ENCODE measurements at regions of chr12 and their contacts with region 1.

Region 1: GRCh38 chr12:93677195-93678064 is at the start of gene CRADD:
- DNase-seq: peak; percentile 53 to 93
- H3K4me3 ChIP-seq: peak within 1 kb of the TSS; percentile 74 to 84
- H3K27ac ChIP-seq: peak within 1 kb of the TSS; percentile 98 to 99
- H3K4me1 ChIP-seq: peaks cover 0 to 24% of the 10 kb centered on the region in 2 donors
- H3K27me3 ChIP-seq: no peaks in the 10 kb centered on the region
- CTCF ChIP-seq: no peak
- total RNA-seq, gene CRADD: not detected

Region 2: DNA sequence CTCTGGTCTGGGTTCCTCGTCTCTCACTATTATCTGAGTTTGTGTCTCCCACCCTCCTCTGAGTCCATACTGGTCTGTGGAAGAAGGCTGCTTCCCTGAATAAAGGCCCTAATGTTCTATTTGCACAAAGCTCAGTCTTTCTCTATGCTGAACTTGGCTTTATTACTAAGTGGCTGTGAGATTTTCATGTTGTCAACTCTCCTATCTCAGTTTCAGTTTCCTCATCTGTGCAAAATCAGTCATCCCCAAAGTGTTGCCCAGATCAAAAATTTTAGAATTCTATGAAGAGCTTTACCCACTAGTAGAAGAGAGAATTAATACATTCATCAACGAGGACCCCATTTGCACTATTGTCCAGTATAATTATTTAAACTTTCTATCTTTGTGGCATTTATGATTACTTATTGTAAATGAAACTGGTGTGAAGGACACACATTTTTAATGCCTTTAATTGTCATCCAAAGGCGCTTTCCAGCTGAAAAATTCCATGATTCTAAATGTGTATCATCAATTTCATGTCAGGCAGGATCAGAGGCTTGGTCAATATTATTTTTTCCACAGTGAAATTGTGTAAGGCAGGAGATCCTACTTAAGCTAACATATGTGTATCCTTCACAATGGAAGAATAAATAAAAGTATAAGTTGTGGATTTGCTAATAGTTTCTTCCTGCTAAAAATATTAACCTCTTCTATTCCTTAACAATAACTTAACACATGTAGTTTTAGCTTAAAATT is 669.2 kb before region 1 on chr12:
- intact Hi-C with region 1: no loop called
- DNase-seq: no peak
- H3K4me3 ChIP-seq: no peak overlapping the region
- H3K27ac ChIP-seq: no peak overlapping the region
- H3K4me1 ChIP-seq: peaks cover 0 to 1% of the 10 kb centered on the region in 2 donors
- H3K27me3 ChIP-seq: no peaks in the 10 kb centered on the region
- CTCF ChIP-seq: no peak

Region 3: DNA sequence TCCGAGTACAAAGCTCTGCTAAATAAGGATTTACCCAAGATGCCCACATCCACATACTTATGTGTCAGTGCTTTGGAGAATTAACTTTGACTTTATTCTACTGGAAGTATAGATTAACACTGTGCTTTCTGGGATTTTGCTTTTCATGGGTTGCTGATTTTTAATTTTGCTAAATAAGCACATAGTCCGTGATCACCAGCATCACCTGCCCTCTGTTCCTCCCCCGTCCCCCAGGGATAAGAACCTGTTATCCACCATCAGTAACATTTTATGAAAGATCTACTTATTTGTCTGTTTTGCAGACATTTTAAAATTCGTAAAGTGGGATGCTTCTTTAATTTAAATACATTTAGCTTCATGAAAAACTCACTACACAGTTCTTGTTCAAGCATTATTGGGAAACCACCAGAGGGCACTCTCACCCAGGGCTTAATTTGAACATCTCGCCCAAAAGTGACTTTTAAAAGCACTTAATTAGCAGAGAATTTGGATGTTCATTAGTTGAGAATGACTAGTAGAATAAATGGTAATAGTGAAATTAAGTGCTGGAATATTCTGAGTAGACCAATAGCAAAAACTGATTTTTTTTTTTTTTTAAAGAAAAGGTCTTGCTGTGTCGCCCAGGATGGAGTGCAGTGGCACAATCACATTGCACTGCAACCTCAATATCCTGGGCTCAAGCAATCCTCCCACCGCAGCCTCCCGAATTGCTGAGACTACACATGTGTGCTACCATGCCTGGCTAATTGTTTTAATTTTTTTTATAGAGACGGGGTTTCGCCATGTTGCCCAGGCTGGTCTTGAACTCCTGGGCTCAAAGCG is 174.4 kb before region 1 on chr12:
- intact Hi-C with region 1: loop called (anchors 5 kb)
- DNase-seq: peak in 1 of 2 donors; percentile 67
- H3K4me3 ChIP-seq: no peak overlapping the region
- H3K27ac ChIP-seq: no peak overlapping the region
- H3K4me1 ChIP-seq: no peaks in the 10 kb centered on the region
- H3K27me3 ChIP-seq: no peaks in the 10 kb centered on the region
- CTCF ChIP-seq: peak; percentile 57 to 81 (median 75)

Region 4: GRCh38 chr12:93591137-93591868 is 86.1 kb before region 1 on chr12:
- intact Hi-C with region 1: loop called (anchors 1 kb)
- DNase-seq: peak; percentile 62 to 91
- H3K4me3 ChIP-seq: peak overlapping the region; percentile 60 to 68
- H3K27ac ChIP-seq: peak overlapping the region; percentile 56 to 62
- H3K4me1 ChIP-seq: peaks cover 0 to 4% of the 10 kb centered on the region in 2 donors
- H3K27me3 ChIP-seq: no peaks in the 10 kb centered on the region
- CTCF ChIP-seq: no peak

Region 5: DNA sequence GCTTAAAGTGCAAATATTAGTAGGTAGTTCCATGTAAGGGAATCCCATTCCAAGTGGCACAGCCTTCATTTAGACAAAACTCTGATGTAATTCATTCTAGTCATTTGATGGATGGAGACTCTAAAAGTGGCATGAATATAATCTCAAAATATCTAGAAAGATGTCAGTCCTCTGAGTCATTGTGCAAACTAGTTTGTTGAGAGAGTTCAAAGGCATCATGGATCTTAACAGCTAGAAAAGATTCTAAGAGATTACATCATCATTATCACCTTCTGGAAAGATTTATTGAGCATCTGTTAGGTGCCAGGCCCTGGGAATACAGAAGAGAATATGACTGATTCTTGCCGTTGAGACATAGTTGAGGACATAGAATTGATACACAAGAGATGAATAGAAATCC is 30.4 kb after region 1 on chr12:
- intact Hi-C with region 1: loop called (anchors 1 kb)
- DNase-seq: no peak
- H3K4me3 ChIP-seq: no peak overlapping the region
- H3K27ac ChIP-seq: peak overlapping the region; percentile 69 to 78
- H3K4me1 ChIP-seq: peaks cover 3 to 41% of the 10 kb centered on the region in 2 donors
- H3K27me3 ChIP-seq: no peaks in the 10 kb centered on the region
- CTCF ChIP-seq: no peak

Region 6: GRCh38 chr12:93742110-93742934 is 64.9 kb after region 1 on chr12:
- intact Hi-C with region 1: loop called (anchors 1 kb)
- DNase-seq: peak in 1 of 2 donors; percentile 90
- H3K4me3 ChIP-seq: peak overlapping the region; percentile 61 to 76
- H3K27ac ChIP-seq: peak overlapping the region; percentile 90 to 93
- H3K4me1 ChIP-seq: peaks cover 2 to 18% of the 10 kb centered on the region in 2 donors
- H3K27me3 ChIP-seq: no peaks in the 10 kb centered on the region
- CTCF ChIP-seq: peak; percentile 17 to 62 (median 39)

Region 7: DNA sequence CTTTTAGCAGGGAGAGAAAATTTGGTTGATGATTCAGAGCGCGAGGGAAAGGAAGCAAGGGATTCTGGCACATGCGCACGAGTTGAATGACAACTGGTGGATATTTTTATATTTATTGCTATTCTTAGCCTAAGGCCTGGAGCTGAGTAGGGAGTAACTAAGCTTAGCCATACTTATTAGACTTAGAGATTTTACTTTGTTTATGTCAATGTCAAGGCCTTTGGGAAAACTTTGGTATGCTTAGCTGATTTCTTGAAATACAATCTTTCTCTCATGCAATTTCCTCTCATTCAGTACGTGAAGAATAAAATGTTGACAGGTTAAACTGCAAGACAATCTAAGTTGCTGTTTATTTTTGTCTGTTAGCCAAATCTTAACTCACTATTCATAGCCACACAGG is 100.9 kb after region 1 on chr12:
- intact Hi-C with region 1: loop called (anchors 5 kb)
- DNase-seq: peak in 1 of 2 donors; percentile 84
- H3K4me3 ChIP-seq: peak overlapping the region in 1 of 2 donors; percentile 15
- H3K27ac ChIP-seq: peak overlapping the region; percentile 91 to 92
- H3K4me1 ChIP-seq: peaks cover 17 to 32% of the 10 kb centered on the region in 2 donors
- H3K27me3 ChIP-seq: no peaks in the 10 kb centered on the region
- CTCF ChIP-seq: no peak

Region 8: DNA sequence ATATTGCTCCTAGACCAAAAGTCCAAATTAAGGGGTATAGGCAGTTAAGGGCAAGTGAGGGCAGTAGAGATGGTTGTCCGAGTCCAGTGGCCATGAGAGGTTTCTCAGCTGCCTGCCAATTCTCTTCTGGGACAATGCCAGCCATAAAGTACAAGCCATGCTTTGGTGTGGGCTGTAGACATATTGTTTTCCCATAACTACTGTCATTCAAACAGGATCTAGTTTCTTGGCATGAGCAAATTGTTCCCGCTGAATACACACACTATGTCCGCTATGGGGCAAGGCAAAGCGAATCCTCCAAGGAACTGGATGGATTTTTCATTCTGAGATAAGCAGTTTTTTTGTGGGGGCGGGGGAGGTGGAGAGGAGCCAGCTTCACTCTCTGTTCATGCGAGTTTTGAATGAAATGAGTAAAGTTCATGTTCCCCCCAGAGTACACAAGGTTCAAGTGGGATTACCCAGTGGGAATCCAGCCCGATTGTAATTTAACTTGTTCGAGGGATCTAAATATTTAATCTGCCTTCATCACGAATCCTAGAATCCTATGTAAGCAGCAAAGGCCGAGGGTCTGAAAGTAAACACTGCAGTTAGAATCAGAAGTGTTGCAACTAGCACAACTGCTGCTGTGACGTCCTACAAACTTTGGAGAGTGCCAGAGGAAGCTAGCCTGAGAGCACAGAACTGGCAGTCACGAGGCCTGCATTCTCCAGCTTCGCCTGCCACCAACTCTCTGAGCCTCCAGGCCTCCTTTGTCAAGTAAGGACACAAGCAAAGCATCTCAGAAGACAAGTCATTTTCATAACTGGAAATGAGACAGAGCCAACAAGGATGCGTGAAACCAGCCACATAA is 136.8 kb after region 1 on chr12:
- intact Hi-C with region 1: loop called (anchors 5 kb)
- DNase-seq: peak; percentile 21 to 92
- H3K4me3 ChIP-seq: peak overlapping the region; percentile 24 to 43
- H3K27ac ChIP-seq: peak overlapping the region; percentile 85 to 98
- H3K4me1 ChIP-seq: peaks cover 4 to 39% of the 10 kb centered on the region in 2 donors
- H3K27me3 ChIP-seq: no peaks in the 10 kb centered on the region
- CTCF ChIP-seq: no peak